HEK293 (cell line): ENCODE measurements at regions of chr10 and their contacts with region 1.

Region 1: DNA sequence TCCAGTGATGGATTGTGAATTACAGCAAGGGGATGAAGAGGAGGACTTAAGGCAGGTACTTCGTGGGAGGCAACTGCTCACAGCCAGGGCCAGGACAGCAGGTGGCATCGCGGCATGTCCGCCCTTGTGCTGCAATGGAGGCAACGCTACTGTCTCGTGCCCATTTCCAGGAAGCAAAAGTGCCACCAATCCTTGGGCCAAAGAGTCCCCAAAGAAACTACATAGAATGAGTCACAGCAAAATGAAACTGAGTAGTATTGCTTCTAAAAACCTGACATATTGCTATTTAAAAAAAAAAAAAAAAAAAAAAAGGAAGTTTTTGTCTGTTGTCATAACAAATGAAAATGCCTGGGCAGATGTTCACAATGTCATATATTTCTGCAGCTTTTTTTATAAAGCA is 46.6 kb downstream of the RSU1 start:
- H3K4me3 ChIP-seq: no peak overlapping the region
- H3K27ac ChIP-seq: no peak overlapping the region
- H3K4me1 ChIP-seq: no peaks in the 10 kb centered on the region
- CTCF ChIP-seq: no peak

Region 2: DNA sequence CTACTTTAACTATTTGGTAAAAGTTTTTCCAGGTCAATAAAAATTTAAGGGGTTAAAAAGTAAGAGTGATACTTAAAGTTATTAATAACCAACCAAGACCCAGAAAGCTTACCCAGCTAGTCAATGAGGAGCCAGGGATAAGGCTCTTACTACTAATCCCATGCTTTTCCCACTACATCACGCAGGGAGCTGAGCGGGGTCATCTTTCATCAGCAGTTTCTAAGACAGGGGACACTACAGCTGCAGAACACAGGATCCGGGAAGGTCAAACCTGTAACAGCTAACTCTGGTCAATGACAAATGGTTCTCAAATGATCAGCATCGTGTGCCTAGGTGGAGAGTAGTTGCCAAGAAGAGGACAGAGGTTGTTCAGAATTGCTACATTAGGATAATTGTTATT is 18.6 kb before region 1 on chr10:
- CTCF ChIA-PET with region 1: no interaction called
- POLR2A ChIA-PET with region 1: no interaction called
- H3K4me3 ChIP-seq: no peak overlapping the region
- H3K27ac ChIP-seq: no peak overlapping the region
- H3K4me1 ChIP-seq: no peaks in the 10 kb centered on the region
- CTCF ChIP-seq: no peak

Region 3: GRCh38 chr10:16867556-16867955 is 96.9 kb after region 1 on chr10:
- CTCF ChIA-PET with region 1: no interaction called
- POLR2A ChIA-PET with region 1: no interaction called
- H3K4me3 ChIP-seq: no peak overlapping the region
- H3K27ac ChIP-seq: no peak overlapping the region
- H3K4me1 ChIP-seq: no peaks in the 10 kb centered on the region
- CTCF ChIP-seq: no peak

Region 4: GRCh38 chr10:17122726-17123661 is 352.3 kb after region 1 on chr10:
- CTCF ChIA-PET with region 1: interaction called, 10 read pairs
- POLR2A ChIA-PET with region 1: no interaction called
- H3K4me3 ChIP-seq: no peak overlapping the region
- H3K27ac ChIP-seq: no peak overlapping the region; the same call in 1 of the 2 replicates
- H3K4me1 ChIP-seq: peaks cover 16% of the 10 kb centered on the region
- CTCF ChIP-seq: no peak